Calu3 (cell line): ENCODE measurements at regions of chr4 and their contacts with region 1.

Region 1: DNA sequence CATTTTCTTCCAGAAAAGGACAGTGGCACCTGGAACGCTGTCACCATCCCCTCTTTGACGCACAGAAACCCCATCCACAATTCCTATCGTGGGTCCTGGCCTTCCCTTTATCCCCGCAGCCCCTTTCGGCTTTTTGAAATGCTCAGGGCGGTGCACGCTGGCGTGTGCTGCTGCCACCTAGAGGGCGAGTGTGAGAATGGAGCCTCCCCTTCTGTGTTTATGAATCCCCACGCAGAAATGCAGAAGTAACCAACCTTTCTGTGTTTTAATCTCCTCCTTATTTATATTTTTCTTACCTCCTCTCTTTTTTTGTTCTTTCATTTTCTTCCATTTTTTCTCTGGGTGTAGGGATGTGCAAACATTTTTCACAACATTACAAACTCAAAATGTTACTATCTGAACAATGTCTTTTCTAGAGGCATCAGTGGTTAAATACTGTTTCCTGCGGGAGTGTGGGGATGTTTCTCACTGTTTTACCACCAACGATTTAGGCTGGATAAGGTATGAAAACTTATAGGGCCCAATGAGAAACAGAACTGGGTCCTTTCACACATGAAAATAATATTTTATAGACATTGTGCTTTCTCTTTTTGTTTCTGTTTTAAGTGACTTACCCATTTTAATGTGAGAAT is 50.0 kb downstream of the TMA16 start:
- DNase-seq: peak; percentile 56
- H3K4me3 Mint-ChIP-seq: no peak overlapping the region
- H3K27ac Mint-ChIP-seq: no peak overlapping the region
- H3K4me1 Mint-ChIP-seq: no peaks in the 10 kb centered on the region
- H3K27me3 Mint-ChIP-seq: no peaks in the 10 kb centered on the region
- CTCF ChIP-seq: peak; percentile 74

Region 2: GRCh38 chr4:162497564-162498167 is 1046.9 kb before region 1 on chr4:
- CTCF ChIA-PET with region 1: no interaction called
- intact Hi-C with region 1: loop called (anchors 1 kb)
- DNase-seq: no peak
- H3K4me3 Mint-ChIP-seq: no peak overlapping the region
- H3K27ac Mint-ChIP-seq: no peak overlapping the region
- H3K4me1 Mint-ChIP-seq: no peaks in the 10 kb centered on the region
- H3K27me3 Mint-ChIP-seq: no peaks in the 10 kb centered on the region
- CTCF ChIP-seq: peak; percentile 61

Region 3: GRCh38 chr4:163107754-163108153 is 436.8 kb before region 1 on chr4:
- CTCF ChIA-PET with region 1: no interaction called
- intact Hi-C with region 1: loop called (anchors 1 kb)
- DNase-seq: peak; percentile 6
- H3K4me3 Mint-ChIP-seq: no peak overlapping the region
- H3K27ac Mint-ChIP-seq: no peak overlapping the region
- H3K4me1 Mint-ChIP-seq: no peaks in the 10 kb centered on the region
- H3K27me3 Mint-ChIP-seq: no peaks in the 10 kb centered on the region
- CTCF ChIP-seq: no peak

Region 4: GRCh38 chr4:163332500-163333406 is 211.8 kb before region 1 on chr4 and contains the start of gene NPY1R:
- CTCF ChIA-PET with region 1: no interaction called
- intact Hi-C with region 1: loop called (anchors 5 kb)
- DNase-seq: peak; percentile 66
- H3K4me3 Mint-ChIP-seq: peak within 1 kb of the TSS; percentile 69
- H3K27ac Mint-ChIP-seq: peak within 1 kb of the TSS; percentile 68
- H3K4me1 Mint-ChIP-seq: peaks cover 14% of the 10 kb centered on the region
- H3K27me3 Mint-ChIP-seq: no peaks in the 10 kb centered on the region
- CTCF ChIP-seq: peak; percentile 41
- total RNA-seq, gene NPY1R: 6.9 and 11.3 TPM in 2 replicates

Region 5: GRCh38 chr4:163494360-163495162 is 50.0 kb before region 1 on chr4 and contains the start of gene TMA16:
- CTCF ChIA-PET with region 1: no interaction called
- intact Hi-C with region 1: loop called (anchors 5 kb)
- DNase-seq: peak; percentile 82
- H3K4me3 Mint-ChIP-seq: peak within 1 kb of the TSS; percentile 99
- H3K27ac Mint-ChIP-seq: peak within 1 kb of the TSS; percentile 99
- H3K4me1 Mint-ChIP-seq: peaks cover 15% of the 10 kb centered on the region
- H3K27me3 Mint-ChIP-seq: no peaks in the 10 kb centered on the region
- CTCF ChIP-seq: no peak
- total RNA-seq, gene TMA16: 34.5 and 44.1 TPM in 2 replicates

Region 6: DNA sequence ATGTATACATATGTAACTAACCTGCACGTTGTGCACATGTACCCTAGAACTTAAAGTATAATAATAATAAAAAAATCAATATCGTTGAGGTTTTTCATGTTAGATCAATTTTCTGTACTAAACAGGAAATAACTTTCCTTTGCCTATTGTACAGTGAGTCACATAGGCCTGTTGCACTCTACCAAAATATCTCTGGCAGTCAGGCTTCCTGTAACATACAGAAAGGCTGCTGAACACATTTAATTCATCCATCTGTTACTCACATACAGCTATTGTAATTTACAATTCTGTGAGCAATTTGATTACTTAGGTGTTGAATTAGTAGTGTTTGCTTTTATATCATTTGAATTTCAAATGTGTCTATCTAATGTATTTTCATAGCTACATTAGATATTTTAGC is 377.8 kb after region 1 on chr4:
- CTCF ChIA-PET with region 1: no interaction called
- intact Hi-C with region 1: no loop called
- DNase-seq: no peak
- H3K4me3 Mint-ChIP-seq: no peak overlapping the region
- H3K27ac Mint-ChIP-seq: no peak overlapping the region
- H3K4me1 Mint-ChIP-seq: no peaks in the 10 kb centered on the region
- H3K27me3 Mint-ChIP-seq: no peaks in the 10 kb centered on the region
- CTCF ChIP-seq: no peak